ENCODE measurements at regions of chr2 and their contacts with region 1.

Region 1: GRCh38 chr2:186903216-186903615 is 54.2 kb upstream of the ZSWIM2 start:
- DNase-seq: no peak

Region 2: DNA sequence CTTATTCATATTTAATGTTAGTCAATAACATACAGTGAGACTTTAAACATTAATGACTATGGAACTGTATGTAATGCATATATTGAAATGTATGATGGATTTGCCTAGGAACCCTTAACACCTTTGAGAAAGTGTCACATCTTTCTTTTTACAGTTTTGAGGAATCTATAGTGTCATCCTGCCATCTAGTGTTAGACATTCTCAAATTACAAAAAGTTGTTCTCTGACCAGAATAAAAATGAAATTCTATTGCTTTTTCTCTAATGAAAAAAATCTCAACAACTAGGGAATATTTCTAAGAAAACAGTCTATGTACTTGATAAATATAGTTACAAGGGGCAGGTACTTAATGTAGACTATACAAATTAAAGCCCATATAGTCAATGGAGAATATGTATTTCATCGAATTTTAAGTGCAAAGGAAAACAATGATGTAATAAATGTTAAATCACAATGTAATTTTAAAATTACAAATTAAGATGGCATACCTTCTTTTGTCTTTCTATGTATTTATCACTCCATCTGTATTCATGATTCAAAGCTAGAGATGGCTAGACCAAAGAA is 549.9 kb after region 1 on chr2:
- in situ Hi-C with region 1: loop called (anchors 25 kb)
- DNase-seq: peak; percentile 20